Dorsolateral prefrontal cortex (tissue), 120 donors: ENCODE measurements at regions of chr11 and their contacts with region 1.

Region 1: DNA sequence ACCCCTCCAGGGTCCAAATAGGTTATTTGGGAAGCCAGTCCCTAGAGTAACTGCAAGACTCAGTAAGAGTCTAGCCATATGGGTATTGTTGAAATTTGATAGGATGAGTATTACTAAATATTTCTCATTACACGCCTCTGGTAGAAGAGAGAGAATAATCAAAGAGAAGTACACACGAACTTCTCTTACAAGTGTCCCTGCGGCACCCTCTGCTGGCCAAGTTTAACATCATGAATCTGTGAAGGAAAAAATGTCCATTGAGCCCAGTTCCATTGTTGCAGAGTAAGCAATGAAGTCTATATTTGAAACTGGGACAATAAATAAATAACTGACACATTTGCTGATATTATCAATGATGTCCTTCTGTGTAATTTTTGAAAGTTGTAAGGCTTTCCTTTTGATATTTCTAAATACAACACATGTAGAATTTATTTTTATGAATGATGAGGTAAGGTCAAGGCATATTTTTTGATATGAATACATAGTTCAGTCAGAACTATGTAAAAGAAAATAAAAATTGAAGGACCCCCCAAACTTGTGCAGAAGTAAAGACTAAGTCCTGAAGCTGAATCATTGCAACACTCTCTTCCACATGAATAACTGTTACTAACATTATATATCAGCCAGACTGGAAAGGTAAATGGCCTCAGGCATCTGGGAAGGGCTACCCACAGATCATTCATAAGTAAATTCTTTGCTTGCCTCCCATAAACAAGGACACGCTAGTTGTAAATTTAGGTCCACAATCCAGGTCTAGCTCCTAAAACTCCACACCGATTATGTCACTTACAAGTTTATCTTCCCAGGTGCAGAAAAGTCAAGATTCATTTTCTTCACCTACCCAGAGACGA is 10.0 kb downstream of the OR51L1 start:
- DNase-seq: peak in 8 of 10 donors; percentile 10 to 77 (median 58)
- H3K4me3 ChIP-seq: no peak overlapping the region
- H3K27ac ChIP-seq: no peak overlapping the region
- H3K27me3 ChIP-seq: peaks cover 0 to 10% (median 0%) of the 10 kb centered on the region in 45 donors
- CTCF ChIP-seq: peak; percentile 21 to 78 (median 62)

Region 2: DNA sequence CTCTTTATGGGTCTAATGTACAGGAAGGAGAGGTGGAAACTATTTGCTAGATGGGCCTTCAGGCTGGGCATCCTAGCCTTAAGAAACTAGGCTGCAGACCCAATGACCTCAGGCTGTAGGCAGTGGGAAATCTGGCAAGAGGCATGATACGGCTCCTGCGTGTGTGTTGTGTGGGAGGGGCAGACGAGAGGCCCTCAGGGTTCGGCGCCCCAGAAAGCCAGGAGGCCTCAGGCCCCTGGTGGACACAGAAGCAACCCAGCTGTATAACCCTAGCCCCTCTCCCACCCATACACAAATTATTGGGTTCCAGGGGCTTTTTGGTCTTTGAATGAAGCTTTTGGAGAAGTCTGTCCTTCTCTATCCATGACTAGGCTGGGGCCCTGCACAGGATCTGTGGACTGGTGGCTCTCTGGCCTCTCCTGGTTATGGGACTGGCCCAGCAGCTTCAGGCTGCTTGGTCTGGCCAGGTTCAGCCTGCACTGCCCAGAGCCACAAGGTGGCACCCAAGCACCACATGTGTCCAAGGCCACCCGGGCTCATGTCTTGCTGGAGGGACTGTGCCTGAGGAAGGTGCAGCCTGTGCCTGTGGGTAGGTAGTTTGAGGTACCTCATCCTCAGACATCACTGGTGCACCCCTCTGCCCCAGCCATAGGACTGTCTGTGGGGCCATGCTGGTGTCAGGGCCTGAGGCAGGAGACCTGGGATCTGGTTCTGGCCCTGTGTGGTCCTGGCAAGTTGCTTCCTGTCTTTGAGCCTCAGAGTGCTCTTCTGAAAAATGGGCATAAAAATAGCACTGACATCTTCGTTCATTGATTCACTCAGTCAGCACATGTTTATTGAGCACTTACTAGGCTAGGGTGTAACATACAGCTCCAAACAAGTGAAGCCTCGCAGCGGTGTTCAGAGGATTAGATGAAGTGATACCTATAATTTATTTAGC is 822.6 kb before region 1 on chr11:
- intact Hi-C with region 1: loop called (anchors 5 to 10 kb)
- DNase-seq: peak in 9 of 10 donors; percentile 35 to 70 (median 65)
- H3K4me3 ChIP-seq: no peak overlapping the region
- H3K27ac ChIP-seq: no peak overlapping the region
- H3K27me3 ChIP-seq: no peaks in the 10 kb centered on the region
- CTCF ChIP-seq: peak in 52 of 56 donors; percentile 18 to 68 (median 48)

Region 3: DNA sequence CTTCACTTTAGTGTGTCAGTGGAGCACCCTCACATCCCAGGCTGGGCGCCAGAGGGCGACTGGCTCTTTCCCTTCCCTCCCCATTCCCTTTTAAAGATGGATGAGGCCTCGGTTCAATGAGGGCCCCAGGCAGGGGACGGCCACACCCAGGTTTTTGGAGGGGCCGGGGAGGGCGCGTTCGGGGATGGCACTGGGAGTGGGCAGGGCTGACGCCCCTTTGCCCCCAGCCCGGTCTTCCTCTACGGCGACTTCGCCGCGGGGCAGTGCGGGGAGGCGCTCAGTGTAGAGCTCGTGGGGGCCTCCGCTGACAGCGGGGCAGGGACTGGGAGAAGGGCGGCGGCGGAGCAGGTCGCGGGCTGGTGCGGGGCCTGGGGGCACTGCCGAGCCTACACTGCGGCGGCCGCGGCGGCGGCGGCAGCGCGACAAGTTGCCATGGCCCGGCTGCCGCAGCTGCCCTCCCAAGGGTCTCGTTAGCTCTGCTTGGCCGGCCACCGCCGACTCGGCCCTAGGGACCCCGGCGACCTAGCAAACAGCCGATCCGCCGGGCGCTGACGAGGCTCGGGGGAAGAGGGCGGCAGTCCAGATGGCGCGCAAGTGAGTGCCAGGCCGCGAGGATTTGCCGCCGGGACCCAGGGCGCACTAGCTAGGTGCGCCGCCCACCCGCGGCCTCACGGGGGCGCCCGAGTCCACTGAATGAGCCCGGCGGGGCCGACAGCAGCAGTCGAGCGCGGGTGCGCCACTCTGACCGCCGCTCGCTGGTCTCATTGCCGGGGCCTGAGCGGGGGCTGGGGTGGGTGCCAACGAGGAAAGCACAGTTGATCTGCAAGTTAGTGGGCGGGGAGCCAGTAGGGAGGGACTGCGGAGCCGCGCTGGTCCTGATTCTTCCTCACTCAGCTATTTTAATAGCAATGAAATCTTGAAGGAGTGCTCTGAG is 817.3 kb before region 1 on chr11:
- intact Hi-C with region 1: loop called (anchors 5 to 10 kb)
- DNase-seq: peak; percentile 80 to 93 (median 86)
- H3K4me3 ChIP-seq: peak overlapping the region; percentile 34 to 79 (median 70)
- H3K27ac ChIP-seq: peak overlapping the region in 24 of 59 donors; percentile 11 to 80 (median 60)
- H3K27me3 ChIP-seq: no peaks in the 10 kb centered on the region
- CTCF ChIP-seq: peak; percentile 62 to 100 (median 98)

Region 4: DNA sequence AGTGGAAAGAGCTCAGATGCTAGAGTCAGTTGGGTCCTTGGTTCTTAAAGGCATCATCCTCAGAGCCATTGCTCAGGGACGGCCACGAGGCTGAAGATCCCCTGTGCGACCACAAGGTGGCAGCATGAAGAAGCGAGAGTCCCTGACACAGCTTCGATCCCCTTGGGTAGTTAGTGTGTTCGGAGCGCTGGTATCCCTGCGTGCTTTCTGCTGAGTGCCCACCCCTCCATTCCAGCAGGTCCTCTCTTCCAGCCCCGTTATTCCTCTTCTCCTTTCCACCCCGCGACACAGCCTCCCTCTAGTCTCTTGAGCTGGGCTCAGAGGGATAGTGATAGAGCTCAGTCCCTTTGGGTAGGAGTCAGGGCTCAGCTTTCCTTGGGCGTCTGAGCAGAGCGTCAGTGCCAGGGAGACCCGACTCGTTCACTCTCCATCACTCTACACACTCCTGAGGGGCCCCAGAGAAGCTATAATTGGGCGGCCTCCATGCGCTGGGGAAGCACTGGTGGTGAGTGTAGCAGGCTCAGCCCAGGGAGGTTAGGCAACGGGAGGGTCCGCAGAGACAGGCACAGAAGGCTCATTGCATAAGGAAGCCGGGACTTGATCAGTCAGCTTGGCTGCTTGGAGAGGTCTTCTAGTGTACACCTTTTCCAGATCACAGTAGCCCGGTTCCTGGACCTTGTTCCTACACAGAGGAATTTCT is 367.5 kb before region 1 on chr11 and contains the start of gene OR51D1:
- intact Hi-C with region 1: loop called (anchors 1 to 10 kb)
- DNase-seq: peak; percentile 54 to 82 (median 73)
- H3K4me3 ChIP-seq: peak within 1 kb of the TSS in 34 of 59 donors; percentile 3 to 49 (median 30)
- H3K27ac ChIP-seq: no peak within 1 kb of the TSS
- H3K27me3 ChIP-seq: peaks cover 0 to 8% (median 0%) of the 10 kb centered on the region in 45 donors
- CTCF ChIP-seq: peak; percentile 52 to 94 (median 86)
- total RNA-seq, gene OR51D1: not detected

Region 5: GRCh38 chr11:4826425-4826824 is 178.2 kb before region 1 on chr11:
- intact Hi-C with region 1: no loop called
- DNase-seq: no peak
- H3K4me3 ChIP-seq: no peak overlapping the region
- H3K27ac ChIP-seq: no peak overlapping the region
- H3K27me3 ChIP-seq: peaks cover 0 to 5% (median 0%) of the 10 kb centered on the region in 45 donors
- CTCF ChIP-seq: peak in 4 of 56 donors; percentile 10 to 32 (median 23)

Region 6: GRCh38 chr11:5071799-5072198 is 67.2 kb after region 1 on chr11:
- intact Hi-C with region 1: no loop called
- DNase-seq: no peak
- H3K4me3 ChIP-seq: no peak overlapping the region
- H3K27ac ChIP-seq: no peak overlapping the region
- H3K27me3 ChIP-seq: peaks cover 0 to 6% (median 0%) of the 10 kb centered on the region in 45 donors
- CTCF ChIP-seq: no peak

Region 7: GRCh38 chr11:5171856-5172255 is 167.2 kb after region 1 on chr11:
- intact Hi-C with region 1: no loop called
- DNase-seq: no peak
- H3K4me3 ChIP-seq: no peak overlapping the region
- H3K27ac ChIP-seq: no peak overlapping the region
- H3K27me3 ChIP-seq: no peaks in the 10 kb centered on the region
- CTCF ChIP-seq: no peak